Sigmoid colon (tissue), 7 donors: ENCODE measurements at regions of chr17 and their contacts with region 1.

Region 1: DNA sequence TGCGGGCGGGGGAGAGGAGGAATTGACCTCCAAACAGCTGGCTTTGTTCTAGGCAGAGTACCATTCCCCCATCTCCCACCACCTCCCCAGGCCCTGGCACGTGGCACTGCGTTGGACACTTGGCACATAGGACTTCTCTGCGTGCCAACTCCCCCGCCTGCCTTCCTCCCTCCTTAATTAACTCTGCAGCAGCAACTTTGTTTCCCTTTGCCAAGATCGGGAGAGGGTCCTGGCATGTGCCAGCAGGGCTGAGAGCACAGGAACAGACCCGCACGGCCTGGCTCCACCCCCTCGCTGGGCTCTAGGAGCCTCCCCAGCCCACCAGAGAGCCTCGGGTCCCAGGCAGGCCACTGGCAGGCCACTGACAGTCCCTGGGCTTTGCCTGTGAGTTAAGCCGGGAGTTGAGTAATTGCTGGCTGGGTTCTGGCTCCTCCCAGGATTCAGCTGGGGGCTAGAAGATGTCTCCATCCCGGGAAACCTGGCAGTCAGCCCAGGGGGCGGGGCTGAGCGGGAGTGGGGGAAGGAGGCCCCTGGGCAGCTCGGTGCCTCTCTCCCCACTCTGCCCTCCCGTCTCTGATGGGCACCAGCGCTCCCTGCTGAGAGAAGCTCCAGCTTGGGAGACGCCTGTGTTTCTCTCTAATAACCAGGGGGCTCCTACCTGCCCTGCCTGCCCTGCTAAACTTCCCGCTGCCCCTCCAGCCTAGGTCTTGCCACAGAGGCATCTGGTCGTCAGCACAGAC is 224.0 kb upstream of the TNRC6C start:
- DNase-seq: peak; percentile 98
- H3K4me3 ChIP-seq: peak overlapping the region in 3 of 4 donors; percentile 16 to 36 (median 31)
- H3K27ac ChIP-seq: peak overlapping the region; percentile 86 to 91 (median 90)
- H3K4me1 ChIP-seq: peaks cover 0 to 49% (median 38%) of the 10 kb centered on the region in 4 donors
- H3K27me3 ChIP-seq: no peaks in the 10 kb centered on the region
- CTCF ChIP-seq: peak in 1 of 4 experiments; percentile 28
- EP300 ChIP-seq: peak in 1 of 4 donors; percentile 39
- POLR2A ChIP-seq: peak in 1 of 2 donors; percentile 28

Region 2: GRCh38 chr17:77542551-77543490 is 191.7 kb before region 1 on chr17:
- intact Hi-C with region 1: loop called (anchors 2 kb)
- DNase-seq: peak; percentile 93
- H3K4me3 ChIP-seq: no peak overlapping the region
- H3K27ac ChIP-seq: no peak overlapping the region
- H3K4me1 ChIP-seq: peaks cover 0 to 25% (median 10%) of the 10 kb centered on the region in 4 donors
- H3K27me3 ChIP-seq: no peaks in the 10 kb centered on the region
- CTCF ChIP-seq: peak; percentile 90 to 93 (median 92)
- EP300 ChIP-seq: no peak
- POLR2A ChIP-seq: no peak

Region 3: DNA sequence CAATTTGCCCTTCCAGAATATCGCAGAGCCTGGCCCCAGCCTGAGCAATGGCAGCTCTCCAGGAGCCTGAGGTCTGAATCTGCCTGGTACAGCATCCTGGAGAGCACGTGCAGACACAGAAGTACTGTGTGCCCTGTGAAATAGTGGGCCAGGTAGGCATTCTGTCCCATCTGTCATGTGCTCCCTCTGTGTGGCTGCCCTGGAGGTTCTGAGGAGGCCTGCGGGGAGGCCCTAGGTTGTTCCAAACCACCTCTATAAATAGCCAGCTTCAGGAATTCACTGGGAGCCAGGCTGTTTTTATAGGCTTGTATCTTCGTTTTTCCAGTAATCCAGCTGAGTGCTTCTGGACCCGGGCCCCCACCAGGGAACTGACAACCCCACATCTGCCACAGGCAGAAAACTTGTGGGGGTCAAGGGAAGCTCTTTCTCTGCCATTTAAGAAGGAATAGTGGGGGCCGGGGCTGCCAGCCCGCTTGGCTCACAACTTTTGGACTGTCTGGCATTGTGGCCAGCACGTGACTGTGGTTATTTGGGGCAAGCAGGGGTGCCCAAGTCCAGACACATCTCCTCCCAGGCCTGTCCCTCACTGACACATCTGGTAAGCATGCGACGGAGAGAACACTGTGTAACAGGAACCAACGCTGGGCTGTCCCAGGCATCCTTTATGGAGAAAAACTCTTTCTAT is 132.3 kb before region 1 on chr17:
- intact Hi-C with region 1: loop called (anchors 1 kb)
- DNase-seq: peak; percentile 92
- H3K4me3 ChIP-seq: no peak overlapping the region
- H3K27ac ChIP-seq: peak overlapping the region; percentile 90 to 95 (median 90)
- H3K4me1 ChIP-seq: peaks cover 0 to 52% (median 44%) of the 10 kb centered on the region in 4 donors
- H3K27me3 ChIP-seq: no peaks in the 10 kb centered on the region
- CTCF ChIP-seq: peak in 1 of 4 experiments; percentile 14
- EP300 ChIP-seq: peak in 3 of 4 donors; percentile 11 to 86 (median 84)
- POLR2A ChIP-seq: no peak

Region 4: DNA sequence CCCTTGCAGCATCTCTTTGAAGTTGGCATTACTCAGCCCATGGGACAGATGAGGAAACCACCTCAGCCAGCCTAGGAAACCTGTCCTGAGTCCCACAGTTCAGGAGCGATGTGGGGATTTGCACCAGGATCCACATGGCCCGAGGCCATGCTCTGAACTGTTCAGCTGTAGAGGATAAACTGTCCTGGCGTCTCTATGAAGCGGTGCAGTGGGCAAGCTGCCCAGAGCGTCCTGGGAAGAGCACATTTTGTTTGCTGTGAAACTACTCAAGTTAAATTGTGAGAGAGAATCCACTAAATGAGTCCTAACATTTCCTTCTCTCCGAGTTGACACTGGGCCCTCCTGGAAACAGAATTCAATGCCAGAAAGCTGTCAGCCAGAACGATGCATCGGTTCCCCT is 52.6 kb before region 1 on chr17:
- intact Hi-C with region 1: loop called (anchors 5 kb)
- DNase-seq: peak; percentile 93
- H3K4me3 ChIP-seq: no peak overlapping the region
- H3K27ac ChIP-seq: peak overlapping the region; percentile 59 to 71 (median 66)
- H3K4me1 ChIP-seq: peaks cover 0 to 17% (median 6%) of the 10 kb centered on the region in 4 donors
- H3K27me3 ChIP-seq: no peaks in the 10 kb centered on the region
- CTCF ChIP-seq: peak; percentile 13 to 48 (median 28)
- EP300 ChIP-seq: no peak
- POLR2A ChIP-seq: no peak

Region 5: DNA sequence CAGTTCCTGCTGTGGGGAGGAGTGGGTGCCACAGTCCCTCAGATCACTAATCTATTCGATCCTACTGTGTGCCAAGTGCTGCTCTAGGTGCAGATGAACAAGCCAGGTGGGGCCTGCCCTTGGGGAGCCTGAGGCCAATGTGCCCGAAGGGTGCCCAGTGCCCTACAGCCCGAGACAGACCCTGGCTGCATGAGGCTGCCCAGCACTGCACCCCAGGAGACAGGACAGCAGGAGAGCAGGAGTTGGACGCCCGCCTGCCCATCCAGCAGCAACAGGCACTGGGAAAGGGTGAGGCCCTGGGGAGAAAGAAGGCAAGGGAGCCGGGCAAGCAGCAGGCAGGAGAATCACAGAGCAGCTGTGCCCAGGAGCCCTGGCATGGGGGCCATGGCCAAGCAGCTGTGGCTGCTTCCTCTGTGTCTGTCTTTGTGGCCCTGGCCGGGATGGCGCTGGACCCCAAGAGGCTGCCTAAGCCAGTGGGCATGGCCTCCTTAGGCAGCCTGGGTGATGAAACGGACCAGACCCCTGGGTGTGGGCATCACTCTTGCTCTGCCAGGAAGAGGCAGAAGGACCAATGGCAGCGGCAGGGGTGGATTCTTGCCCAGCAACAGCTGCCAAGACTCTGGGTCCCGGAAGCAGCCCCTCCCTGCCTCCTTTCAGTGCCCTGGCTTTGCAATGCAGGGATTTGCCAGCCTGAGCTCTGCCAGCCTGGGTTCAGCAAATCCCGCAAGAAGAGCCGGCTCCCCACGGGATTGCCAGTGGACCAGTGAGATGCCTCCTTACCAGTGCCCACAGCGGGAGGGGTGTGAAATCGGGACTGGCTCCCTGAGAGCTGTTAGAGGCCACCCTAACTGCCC is 44.4 kb after region 1 on chr17:
- intact Hi-C with region 1: loop called (anchors 5 kb)
- DNase-seq: peak; percentile 94
- H3K4me3 ChIP-seq: peak overlapping the region in 1 of 4 donors; percentile 19
- H3K27ac ChIP-seq: peak overlapping the region; percentile 76 to 86 (median 78)
- H3K4me1 ChIP-seq: peaks cover 0 to 19% (median 16%) of the 10 kb centered on the region in 4 donors
- H3K27me3 ChIP-seq: no peaks in the 10 kb centered on the region
- CTCF ChIP-seq: no peak
- EP300 ChIP-seq: no peak
- POLR2A ChIP-seq: no peak

Region 6: GRCh38 chr17:77957857-77958715 is 223.6 kb after region 1 on chr17 and contains the start of gene TNRC6C:
- intact Hi-C with region 1: loop called (anchors 5 kb)
- DNase-seq: peak; percentile 100
- H3K4me3 ChIP-seq: peak within 1 kb of the TSS; percentile 50 to 79 (median 72)
- H3K27ac ChIP-seq: peak within 1 kb of the TSS; percentile 82 to 90 (median 86)
- H3K4me1 ChIP-seq: peaks cover 0 to 46% (median 31%) of the 10 kb centered on the region in 4 donors
- H3K27me3 ChIP-seq: no peaks in the 10 kb centered on the region
- CTCF ChIP-seq: no peak
- EP300 ChIP-seq: no peak
- POLR2A ChIP-seq: peak; percentile 100
- total RNA-seq, gene TNRC6C: 5.8 to 22.1 (median 18.2) TPM

Region 7: DNA sequence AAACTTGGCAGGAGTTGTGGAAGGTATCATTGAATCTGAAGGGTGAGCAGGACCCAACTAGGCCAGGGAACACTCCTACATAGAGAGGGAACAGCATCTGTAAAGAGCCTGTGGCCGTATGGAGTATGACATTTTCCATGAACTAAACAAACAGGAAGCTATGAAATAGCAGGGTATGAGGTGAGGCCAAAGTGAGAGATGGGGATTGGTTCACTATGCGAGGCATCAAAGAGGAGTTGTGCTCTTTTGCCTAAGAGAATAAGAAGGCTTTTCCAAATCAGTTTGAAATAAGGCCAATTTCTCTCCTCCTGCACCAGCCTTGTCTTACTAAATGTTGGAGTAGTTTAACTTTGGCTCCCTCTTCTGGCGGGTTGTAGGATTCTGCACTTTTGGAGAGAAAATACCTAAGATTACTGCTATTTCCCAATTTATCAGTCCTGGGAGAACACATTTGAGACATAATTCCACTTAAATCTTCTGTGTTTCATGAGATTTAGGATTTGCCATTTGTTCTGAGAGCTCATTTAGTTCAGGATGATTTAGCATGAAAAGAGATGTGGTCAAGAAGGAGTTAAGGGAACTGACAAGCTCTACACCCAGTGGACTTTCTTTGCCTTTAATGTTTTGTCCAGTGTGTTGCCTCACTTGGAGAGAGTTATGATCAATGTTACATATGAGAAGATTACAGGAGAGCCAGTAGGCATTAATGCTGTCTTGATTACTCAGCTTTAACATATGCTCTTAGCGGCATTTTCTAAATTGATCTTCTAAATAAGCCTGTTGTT is 279.4 kb after region 1 on chr17:
- intact Hi-C with region 1: loop called (anchors 2 kb)
- DNase-seq: peak; percentile 72
- H3K4me3 ChIP-seq: no peak overlapping the region
- H3K27ac ChIP-seq: no peak overlapping the region
- H3K4me1 ChIP-seq: peaks cover 0 to 5% (median 0%) of the 10 kb centered on the region in 4 donors
- H3K27me3 ChIP-seq: no peaks in the 10 kb centered on the region
- CTCF ChIP-seq: peak; percentile 65 to 78 (median 72)
- EP300 ChIP-seq: no peak
- POLR2A ChIP-seq: no peak